ENCODE measurements at regions of chr10 and their contacts with region 1.

Region 1: GRCh38 chr10:117496616-117497028 is 45.9 kb upstream of the EMX2 start:
- DNase-seq: peak; percentile 3
- H3K4me3 ChIP-seq: no peak overlapping the region
- H3K27ac ChIP-seq: no peak overlapping the region
- H3K4me1 ChIP-seq: no peaks in the 10 kb centered on the region
- H3K27me3 ChIP-seq: peaks cover 0 to 57% (median 1%) of the 10 kb centered on the region in 4 donors
- CTCF ChIP-seq: peak; percentile 88 to 96 (median 92)
- POLR2A ChIP-seq: no peak

Region 2: DNA sequence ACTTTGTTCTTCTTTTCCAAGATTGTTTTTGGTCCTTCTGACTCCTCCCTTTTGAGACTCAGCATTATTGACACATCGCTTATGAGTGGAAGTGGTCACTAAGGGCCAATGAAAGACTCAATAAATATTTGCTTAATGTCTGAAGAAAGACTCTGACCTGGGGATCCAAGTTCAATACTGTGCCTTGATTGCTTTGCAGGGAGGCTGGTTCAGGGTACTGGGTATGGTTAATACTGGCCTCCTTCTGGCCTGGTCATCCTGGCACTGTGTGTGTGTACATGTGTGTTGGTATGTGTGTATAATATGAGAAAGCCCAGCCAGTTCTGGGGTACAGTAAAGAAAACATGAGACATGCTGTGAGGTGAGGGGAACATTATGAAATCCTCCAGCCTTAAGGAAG is 113.8 kb before region 1 on chr10:
- intact Hi-C with region 1: no loop called
- DNase-seq: no peak
- H3K4me3 ChIP-seq: no peak overlapping the region
- H3K27ac ChIP-seq: no peak overlapping the region
- H3K4me1 ChIP-seq: no peaks in the 10 kb centered on the region
- H3K27me3 ChIP-seq: peaks cover 0 to 55% (median 0%) of the 10 kb centered on the region in 4 donors
- CTCF ChIP-seq: no peak
- POLR2A ChIP-seq: no peak

Region 3: DNA sequence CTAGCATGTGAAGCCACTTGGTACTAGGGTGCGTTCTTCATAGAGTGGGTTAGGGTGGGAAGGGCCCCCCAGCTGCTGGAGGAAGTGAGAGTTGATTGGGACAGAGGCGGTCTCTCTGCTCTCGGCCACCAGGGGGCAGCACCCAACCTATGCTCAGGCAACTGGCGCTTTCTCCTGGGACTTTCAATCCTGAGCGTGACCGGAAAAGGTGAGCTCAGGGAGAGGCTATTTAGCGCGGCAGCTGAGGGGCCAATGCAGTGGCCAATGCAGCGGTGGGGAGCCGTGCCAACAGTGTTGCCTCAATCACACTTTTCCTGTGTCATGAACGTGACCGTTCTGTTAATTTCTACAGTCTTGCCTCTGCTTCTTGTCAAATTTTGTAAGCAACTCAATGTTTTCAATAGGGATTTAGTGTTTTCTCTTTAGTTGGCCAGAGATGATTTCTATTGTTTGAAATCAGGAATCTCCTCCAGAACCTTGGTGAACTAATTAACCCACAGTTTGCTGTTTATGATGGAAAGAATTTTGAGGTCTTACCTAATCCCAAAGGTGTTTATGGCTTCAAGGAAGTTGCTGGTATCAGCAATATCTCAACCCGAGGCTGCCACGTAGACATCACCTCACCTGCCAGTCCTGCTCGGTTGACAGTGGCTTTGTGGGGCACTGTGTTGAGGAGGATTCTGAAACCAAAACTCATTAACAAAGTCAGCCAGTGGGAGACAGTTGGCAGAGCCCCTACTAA is 53.5 kb before region 1 on chr10:
- intact Hi-C with region 1: no loop called
- DNase-seq: no peak
- H3K4me3 ChIP-seq: peak overlapping the region in 2 of 4 donors; percentile 22 to 41
- H3K27ac ChIP-seq: peak overlapping the region in 2 of 4 donors; percentile 27 to 52
- H3K4me1 ChIP-seq: peaks cover 0 to 19% (median 9%) of the 10 kb centered on the region in 3 donors
- H3K27me3 ChIP-seq: peaks cover 0 to 18% (median 0%) of the 10 kb centered on the region in 4 donors
- CTCF ChIP-seq: peak; percentile 59 to 89 (median 80)
- POLR2A ChIP-seq: no peak

Region 4: DNA sequence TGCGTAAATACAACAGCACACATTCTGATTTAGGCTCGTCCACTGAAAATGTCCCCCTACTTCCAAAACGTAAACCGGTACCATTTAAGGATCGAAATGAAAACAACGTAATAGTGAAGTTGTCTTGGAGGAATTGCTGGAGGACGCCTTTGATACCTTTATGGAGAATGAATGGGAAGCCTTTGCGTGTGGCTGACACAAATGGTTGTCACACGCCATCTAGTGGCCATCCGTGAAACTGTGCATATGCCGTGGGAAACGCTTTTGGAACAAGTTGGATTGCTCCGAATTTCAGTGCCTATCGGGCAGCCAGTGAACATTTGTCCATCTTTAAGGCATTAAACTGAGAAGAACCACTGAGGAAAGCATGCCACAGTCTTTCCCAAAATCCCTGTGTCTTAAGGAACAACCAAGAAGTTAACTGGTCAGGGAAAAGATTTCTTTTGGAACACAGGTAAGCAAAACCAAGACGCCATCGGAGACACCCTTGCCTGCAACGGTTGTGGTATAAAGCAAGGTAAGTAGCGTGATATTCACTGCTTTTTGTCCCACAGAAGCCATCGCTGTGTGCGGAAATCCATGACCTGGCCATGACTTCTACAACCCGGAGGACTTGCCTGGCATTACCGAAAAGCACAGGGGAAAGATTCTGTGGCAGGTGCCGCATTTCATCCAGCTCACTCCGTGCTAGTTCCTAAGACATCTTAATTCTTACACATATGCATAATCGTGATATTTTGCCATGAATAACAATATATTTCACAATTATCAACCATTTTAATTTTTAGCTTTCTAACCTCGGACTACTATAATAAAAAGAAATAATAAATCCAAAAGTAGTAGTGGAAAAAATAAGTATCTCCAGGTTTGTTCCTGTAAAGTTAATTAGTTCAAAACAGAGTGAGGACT is 744.9 kb after region 1 on chr10:
- intact Hi-C with region 1: loop called (anchors 5 kb)
- DNase-seq: no peak
- H3K4me3 ChIP-seq: no peak overlapping the region
- H3K27ac ChIP-seq: no peak overlapping the region
- H3K4me1 ChIP-seq: peaks cover 0 to 6% (median 0%) of the 10 kb centered on the region in 3 donors
- H3K27me3 ChIP-seq: peaks cover 0 to 93% (median 2%) of the 10 kb centered on the region in 4 donors
- CTCF ChIP-seq: peak; percentile 63 to 93 (median 88)
- POLR2A ChIP-seq: no peak

Region 5: DNA sequence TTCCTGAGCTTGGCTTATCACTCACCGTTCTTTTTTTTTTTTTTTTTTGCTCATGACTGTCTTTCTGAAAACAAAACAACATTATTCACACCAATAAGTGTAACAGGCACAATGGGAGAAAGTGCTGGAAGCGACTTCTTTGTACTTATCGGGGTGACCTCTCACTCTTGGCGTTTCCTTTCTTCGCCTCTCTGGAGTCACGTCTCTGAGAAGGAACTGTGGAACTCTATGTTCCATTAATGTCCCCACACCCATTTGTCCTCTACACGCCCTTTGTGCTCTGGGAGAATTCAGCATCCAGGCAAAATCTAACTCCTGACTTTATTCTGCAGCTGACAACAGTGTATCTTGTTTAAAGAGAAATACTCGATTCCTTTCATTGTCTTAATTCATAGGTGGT is 916.3 kb after region 1 on chr10:
- intact Hi-C with region 1: loop called (anchors 10 kb)
- DNase-seq: no peak
- H3K4me3 ChIP-seq: no peak overlapping the region
- H3K27ac ChIP-seq: no peak overlapping the region
- H3K4me1 ChIP-seq: no peaks in the 10 kb centered on the region
- H3K27me3 ChIP-seq: peaks cover 0 to 57% (median 2%) of the 10 kb centered on the region in 4 donors
- CTCF ChIP-seq: no peak
- POLR2A ChIP-seq: no peak